ENCODE measurements at regions of chr11 and their contacts with region 1.

Region 1: GRCh38 chr11:130671801-130672700 is 223.6 kb downstream of the ADAMTS15 start:
- DNase-seq: peak; percentile 92
- H3K4me3 ChIP-seq: no peak overlapping the region
- H3K27ac ChIP-seq: peak overlapping the region; percentile 72 to 87 (median 82)
- H3K4me1 ChIP-seq: peaks cover 0 to 71% (median 65%) of the 10 kb centered on the region in 4 donors
- H3K27me3 ChIP-seq: no peaks in the 10 kb centered on the region
- CTCF ChIP-seq: no peak
- EP300 ChIP-seq: peak in 2 of 4 donors; percentile 61 to 62
- POLR2A ChIP-seq: no peak

Region 2: DNA sequence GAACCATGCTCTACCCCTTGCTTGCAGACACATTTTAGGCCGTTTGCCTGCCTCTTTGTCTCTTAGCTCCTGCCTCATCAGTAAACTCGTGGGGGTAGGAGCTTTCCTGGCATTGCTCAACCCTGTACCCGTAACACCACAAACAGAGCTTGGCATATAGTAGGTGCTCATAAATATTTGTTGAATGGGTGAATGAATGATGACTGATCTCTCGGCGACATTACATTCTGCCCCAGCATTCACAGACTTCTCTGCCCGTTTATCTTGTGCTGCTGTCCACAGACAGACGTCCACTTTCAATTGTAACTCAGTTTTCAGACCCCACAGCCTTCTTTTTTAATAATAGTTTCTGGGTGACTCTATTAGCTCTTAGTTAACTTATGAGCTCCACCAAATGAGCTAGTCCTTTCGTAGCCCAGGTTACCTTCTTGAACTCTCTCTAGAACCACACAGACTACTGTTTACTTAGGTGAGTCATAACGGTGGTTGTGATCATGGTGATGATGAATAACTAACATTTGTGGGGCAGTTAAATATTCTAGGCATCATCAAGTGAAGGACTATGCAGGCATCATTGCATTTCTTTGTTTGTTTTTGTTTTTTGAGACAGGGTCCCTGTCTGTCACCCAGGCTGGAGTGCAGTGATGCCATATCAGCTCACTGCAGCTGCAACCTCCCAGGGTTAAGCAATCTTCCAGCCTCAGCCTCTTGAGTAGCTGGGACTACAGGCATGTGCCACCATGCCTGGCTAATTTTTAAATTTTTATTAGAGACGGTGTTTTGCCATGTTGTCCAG is 35.1 kb before region 1 on chr11:
- intact Hi-C with region 1: loop called (anchors 5 kb)
- DNase-seq: no peak
- H3K4me3 ChIP-seq: no peak overlapping the region
- H3K27ac ChIP-seq: peak overlapping the region; percentile 42 to 65 (median 52)
- H3K4me1 ChIP-seq: peaks cover 0 to 48% (median 25%) of the 10 kb centered on the region in 4 donors
- H3K27me3 ChIP-seq: no peaks in the 10 kb centered on the region
- CTCF ChIP-seq: no peak
- EP300 ChIP-seq: no peak
- POLR2A ChIP-seq: no peak

Region 3: DNA sequence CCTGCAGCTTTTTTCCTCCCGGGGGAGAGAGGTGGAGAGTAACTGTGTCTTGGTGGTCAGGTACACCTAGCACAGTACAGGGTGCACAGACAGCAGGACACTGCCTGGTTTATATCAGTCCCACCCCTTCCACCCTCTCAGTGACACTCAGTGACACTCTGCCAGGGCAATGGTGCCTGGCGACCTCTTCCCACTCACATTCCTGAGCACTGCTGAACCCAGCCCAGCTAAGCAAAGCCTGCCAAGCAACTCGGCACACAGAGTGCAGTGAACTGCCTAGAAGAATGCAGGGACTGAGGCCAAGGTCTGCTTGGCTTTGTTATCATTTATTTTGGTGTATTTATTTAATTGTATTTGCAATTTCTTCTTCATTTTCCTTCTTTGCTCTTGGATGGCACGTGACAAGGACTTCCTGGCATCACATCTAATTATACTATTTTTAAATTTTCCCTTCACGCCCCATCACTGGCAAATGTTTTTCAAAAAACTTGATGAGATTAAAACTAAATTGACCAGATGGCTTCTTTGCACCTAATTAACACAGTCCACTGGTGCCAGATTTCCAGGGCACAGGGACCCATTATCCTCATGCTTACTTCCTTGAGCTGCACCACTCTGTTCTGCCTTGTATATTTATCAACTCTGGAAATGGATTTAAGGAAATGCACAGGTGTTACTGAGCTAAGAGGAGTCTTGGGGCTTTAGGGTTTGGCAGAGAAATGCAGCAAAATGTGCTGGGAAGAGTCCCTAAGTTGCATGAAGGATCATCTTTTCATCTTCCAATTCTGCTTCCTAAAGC is 18.0 kb before region 1 on chr11:
- intact Hi-C with region 1: loop called (anchors 2 kb)
- DNase-seq: peak; percentile 86
- H3K4me3 ChIP-seq: no peak overlapping the region
- H3K27ac ChIP-seq: peak overlapping the region; percentile 69 to 78 (median 76)
- H3K4me1 ChIP-seq: peaks cover 0 to 49% (median 43%) of the 10 kb centered on the region in 4 donors
- H3K27me3 ChIP-seq: no peaks in the 10 kb centered on the region
- CTCF ChIP-seq: no peak
- EP300 ChIP-seq: no peak
- POLR2A ChIP-seq: no peak

Measured in sigmoid colon (tissue), 7 donors.